ENCODE measurements at regions of chr1 and their contacts with region 1.

Region 1: GRCh38 chr1:111690306-111690617 is 48.9 kb downstream of the INKA2 start:
- DNase-seq: no peak
- CTCF ChIP-seq: no peak

Region 2: GRCh38 chr1:111704776-111705175 is 14.5 kb after region 1 on chr1:
- CTCF ChIA-PET with region 1: interaction called, 23 read pairs
- POLR2A ChIA-PET with region 1: no interaction called
- DNase-seq: no peak
- CTCF ChIP-seq: no peak

Region 3: GRCh38 chr1:111786669-111787207 is 96.5 kb after region 1 on chr1:
- CTCF ChIA-PET with region 1: no interaction called
- POLR2A ChIA-PET with region 1: no interaction called
- DNase-seq: no peak
- CTCF ChIP-seq: no peak

Region 4: DNA sequence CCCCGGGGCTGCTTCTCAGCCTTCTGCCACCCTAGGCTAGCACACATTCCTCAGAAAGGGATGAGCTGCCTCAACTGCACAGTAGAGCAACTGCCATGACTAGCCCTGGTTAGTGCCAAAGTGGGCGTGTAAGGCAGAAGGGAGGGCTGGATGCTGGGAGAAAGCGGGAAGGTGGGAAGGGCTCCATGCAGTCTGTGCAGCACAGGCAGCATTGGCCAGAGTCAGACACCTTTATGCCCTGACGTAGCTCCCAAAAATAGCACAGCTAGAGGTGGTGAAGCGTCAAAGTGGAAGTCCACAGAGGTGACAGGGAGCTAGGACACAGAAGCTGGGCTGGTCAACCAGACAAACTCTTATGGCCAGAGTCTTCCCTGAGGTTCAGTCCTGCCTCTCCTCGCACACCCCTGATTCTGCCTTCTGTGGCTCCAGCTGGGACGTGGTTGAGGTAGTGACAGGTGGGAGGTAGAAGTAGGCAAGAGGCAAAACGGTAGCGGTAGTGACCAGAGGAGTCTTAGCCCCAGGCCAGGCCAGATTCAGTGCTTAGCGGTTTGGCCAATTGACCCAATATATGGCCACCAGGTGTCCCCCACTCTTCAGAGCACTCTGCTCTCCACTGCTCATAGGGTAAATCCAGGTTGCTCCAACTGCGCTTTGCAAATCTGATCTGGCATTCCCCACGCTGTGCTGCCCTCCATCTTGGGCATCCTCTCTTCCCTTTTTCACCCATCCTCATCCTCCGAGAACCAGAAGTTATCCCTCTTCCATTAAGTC is 111.0 kb after region 1 on chr1:
- CTCF ChIA-PET with region 1: no interaction called
- POLR2A ChIA-PET with region 1: no interaction called
- DNase-seq: no peak
- CTCF ChIP-seq: no peak

Measured in GM10248 (cell line).